ENCODE measurements at regions of chr16 and their contacts with region 1.

Region 1: GRCh38 chr16:89791278-89791995 is 25.0 kb downstream of the FANCA start:
- DNase-seq: no peak
- ATAC-seq: no peak

Region 2: DNA sequence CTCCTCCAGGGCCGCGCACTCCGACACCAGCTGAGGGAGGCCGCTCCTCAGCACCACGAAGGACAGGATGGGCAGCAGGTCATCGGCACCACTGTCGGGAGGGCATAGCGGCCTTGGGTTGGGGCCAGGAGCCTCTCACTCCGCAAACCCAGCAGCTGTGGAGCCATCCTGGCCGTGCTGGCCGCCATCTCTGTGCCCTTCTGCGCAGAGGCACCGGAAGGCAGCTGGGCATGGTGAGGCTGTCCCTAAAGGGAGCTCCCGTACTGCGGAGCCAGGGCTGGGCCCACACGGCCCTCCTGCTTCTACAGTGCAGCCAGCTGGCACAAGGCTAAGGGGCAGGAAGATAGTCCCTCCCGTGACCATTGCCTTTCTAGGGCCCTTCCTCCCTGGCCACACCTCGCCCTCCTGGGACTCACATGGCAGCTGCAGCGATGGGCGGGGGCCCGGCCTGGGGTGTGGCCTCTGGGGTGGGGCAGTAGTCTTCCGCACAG is 83.0 kb before region 1 on chr16:
- intact Hi-C with region 1: loop called (anchors 5 kb)
- DNase-seq: no peak
- ATAC-seq: no peak